Posterior cingulate gyrus (tissue), 11 donors: ENCODE measurements at regions of chr14 and their contacts with region 1.

Region 1: DNA sequence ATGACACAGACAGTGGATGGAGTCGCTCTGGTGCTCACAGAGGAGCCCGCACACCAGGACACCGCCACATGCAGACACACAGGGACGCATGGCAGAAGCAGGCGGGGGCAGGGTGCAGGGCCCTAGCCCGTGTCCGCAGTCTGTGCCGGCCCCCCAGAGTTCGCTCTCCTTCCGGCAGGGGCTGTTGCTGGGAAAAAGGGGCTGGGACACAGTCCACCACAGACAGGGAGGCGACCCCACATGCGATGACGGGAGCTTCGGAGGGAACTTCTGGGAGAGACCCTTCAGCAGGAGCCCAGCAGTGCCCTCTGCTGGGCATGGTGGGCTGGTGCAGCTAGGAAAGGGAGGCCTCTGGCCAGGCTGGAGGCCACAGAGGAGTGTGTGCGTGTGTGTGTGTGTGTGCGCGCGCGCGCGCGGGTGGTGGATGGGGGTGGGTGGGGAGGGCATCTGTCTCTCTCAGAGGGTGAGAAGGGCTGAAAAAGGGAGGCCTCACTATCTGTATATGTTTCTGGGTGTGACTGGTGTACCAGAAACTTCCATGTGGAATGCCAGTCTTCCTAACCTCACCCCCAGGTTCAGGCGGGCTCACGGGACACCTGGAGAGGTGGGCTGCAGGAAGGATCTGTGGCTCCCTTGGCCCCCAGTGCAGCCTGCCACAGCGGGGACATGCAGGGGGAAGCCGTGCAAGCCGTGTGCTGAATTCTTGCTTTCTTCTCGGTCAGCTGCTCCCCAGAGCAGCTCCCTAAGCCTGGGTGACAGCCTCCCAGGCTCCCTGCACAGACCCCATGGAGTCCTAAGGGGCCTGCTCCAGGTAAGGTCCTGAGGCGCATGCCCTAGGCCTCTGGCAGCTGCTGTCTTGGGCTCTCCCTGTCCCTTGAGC is 60.7 kb downstream of the PLEKHG3 start:
- DNase-seq: peak in 9 of 10 donors; percentile 45 to 96 (median 74)

Region 2: GRCh38 chr14:64708148-64709004 is 56.5 kb before region 1 on chr14:
- intact Hi-C with region 1: loop called (anchors 5 kb)
- DNase-seq: peak in 2 of 10 donors; percentile 11 to 91

Region 3: GRCh38 chr14:64720131-64720576 is 44.7 kb before region 1 on chr14:
- intact Hi-C with region 1: no loop called
- DNase-seq: peak in 2 of 10 donors; percentile 18 to 57